ENCODE measurements at regions of chr1 and their contacts with region 1.

Region 1: GRCh38 chr1:220776720-220777326 is 9.9 kb upstream of the MTARC1 start:
- DNase-seq: no peak
- ATAC-seq: peak; percentile 93
- H3K4me3 ChIP-seq: no peak overlapping the region
- H3K27ac ChIP-seq: no peak overlapping the region
- H3K4me1 ChIP-seq: no peaks in the 10 kb centered on the region
- H3K27me3 ChIP-seq: no peaks in the 10 kb centered on the region
- CTCF ChIP-seq: peak; percentile 92 to 96 (median 94)
- EP300 ChIP-seq: no peak
- POLR2A ChIP-seq: no peak
- RAD21 ChIP-seq: peak; percentile 86

Region 2: DNA sequence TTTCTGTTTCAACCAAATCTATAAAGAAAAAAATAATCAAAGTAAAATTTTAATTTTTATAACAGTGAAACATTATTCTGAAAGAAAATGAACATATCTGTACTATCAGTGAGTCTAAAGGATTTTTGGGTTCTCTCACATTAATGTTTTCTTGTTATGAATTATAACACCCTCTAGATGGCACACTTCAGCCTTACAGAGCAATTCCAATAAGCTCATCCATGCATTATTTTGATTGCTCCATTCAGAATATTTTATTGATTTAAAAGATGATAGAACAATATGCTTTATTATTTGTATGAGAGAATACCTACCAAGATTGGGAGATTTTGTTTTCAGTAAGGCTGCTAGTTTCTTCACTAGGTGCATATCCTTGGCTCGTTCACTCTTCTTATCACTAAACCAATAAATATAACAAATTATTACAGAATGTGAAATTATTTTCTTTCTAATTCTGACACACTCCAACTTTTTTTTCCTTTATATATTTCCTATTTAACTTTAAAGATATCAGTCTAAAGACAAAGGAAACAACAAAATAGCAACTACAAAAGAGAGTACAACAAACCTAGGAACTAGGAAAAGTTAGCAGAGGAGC is 587.0 kb before region 1 on chr1:
- CTCF ChIA-PET with region 1: interaction called, 3 read pairs
- POLR2A ChIA-PET with region 1: no interaction called
- RAD21 ChIA-PET with region 1: no interaction called
- SMC1A ChIA-PET with region 1: interaction called, 4 read pairs
- in situ Hi-C with region 1: no loop called
- intact Hi-C with region 1: loop called (anchors 1 kb)
- DNase-seq: no peak
- ATAC-seq: peak; percentile 67
- H3K4me3 ChIP-seq: no peak overlapping the region
- H3K27ac ChIP-seq: no peak overlapping the region
- H3K4me1 ChIP-seq: no peaks in the 10 kb centered on the region
- H3K27me3 ChIP-seq: no peaks in the 10 kb centered on the region
- CTCF ChIP-seq: peak in 2 of 3 experiments; percentile 34 to 53; a peak in 3 of 6 replicates
- EP300 ChIP-seq: no peak
- POLR2A ChIP-seq: no peak
- RAD21 ChIP-seq: peak; percentile 47; the same call in 1 of the 2 replicates

Region 3: DNA sequence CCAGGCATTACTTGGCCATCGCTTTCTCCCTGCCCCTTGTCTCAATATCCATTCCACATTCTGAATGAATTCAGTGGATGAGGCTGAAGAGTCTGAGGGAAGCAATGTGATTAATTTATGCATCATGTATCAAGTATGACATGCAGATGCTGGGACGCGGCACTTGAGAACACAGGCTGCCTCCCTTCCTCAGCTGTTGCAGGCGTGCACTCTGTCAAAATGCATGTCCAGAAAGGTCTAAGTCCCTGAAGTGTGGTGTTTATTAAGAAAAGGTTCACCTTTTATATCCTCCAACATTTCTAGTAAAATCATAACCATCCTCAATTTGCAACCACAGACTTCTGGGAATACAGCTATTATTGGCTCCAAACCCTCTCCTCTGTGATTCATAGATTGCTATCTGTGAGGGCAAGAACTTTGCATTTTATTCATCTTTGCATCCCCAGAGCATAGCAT is 481.9 kb before region 1 on chr1:
- CTCF ChIA-PET with region 1: interaction called, 26 read pairs
- POLR2A ChIA-PET with region 1: no interaction called
- RAD21 ChIA-PET with region 1: interaction called, 4 read pairs
- SMC1A ChIA-PET with region 1: interaction called, 12 read pairs
- in situ Hi-C with region 1: loop called (anchors 5 kb)
- intact Hi-C with region 1: loop called (anchors 2 kb)
- DNase-seq: no peak
- ATAC-seq: no peak
- H3K4me3 ChIP-seq: no peak overlapping the region
- H3K27ac ChIP-seq: no peak overlapping the region
- H3K4me1 ChIP-seq: no peaks in the 10 kb centered on the region
- H3K27me3 ChIP-seq: no peaks in the 10 kb centered on the region
- CTCF ChIP-seq: no peak
- EP300 ChIP-seq: no peak
- POLR2A ChIP-seq: no peak
- RAD21 ChIP-seq: no peak

Region 4: DNA sequence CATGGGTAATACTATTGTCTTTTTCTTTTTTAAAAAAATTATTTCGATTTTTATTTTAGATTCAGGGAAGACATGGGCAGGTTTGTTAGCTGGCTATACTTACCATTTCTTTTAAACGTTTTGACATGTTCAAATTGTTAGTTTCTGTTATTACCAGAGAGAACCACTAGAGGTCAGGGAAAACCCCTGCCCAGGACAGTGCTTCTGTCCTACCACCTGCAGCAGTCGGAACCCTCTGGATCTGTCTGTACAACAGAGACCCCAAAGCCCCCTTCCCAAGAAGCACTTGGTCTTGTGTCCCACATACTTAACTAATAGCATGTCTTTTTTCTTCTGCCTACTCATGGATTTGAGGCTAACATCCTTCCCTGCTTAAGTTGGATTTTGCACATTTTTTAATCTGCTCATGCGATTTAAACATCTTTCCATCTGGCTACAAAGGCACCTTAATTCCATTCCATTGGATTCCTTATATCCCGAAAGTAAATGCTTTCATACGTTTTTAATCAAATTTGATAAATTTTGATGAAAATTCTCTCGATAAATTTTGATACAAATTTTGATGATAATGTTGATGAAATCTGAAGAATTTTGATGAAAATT is 96.6 kb before region 1 on chr1:
- CTCF ChIA-PET with region 1: interaction called, 29 read pairs
- POLR2A ChIA-PET with region 1: no interaction called
- RAD21 ChIA-PET with region 1: interaction called, 5 read pairs
- SMC1A ChIA-PET with region 1: interaction called, 9 read pairs
- in situ Hi-C with region 1: loop called (anchors 10 kb)
- intact Hi-C with region 1: loop called (anchors 1 kb)
- DNase-seq: no peak
- ATAC-seq: peak; percentile 97
- H3K4me3 ChIP-seq: no peak overlapping the region
- H3K27ac ChIP-seq: no peak overlapping the region
- H3K4me1 ChIP-seq: no peaks in the 10 kb centered on the region
- H3K27me3 ChIP-seq: no peaks in the 10 kb centered on the region
- CTCF ChIP-seq: peak; percentile 63 to 77 (median 66)
- EP300 ChIP-seq: no peak
- POLR2A ChIP-seq: no peak
- RAD21 ChIP-seq: peak; percentile 72

Region 5: GRCh38 chr1:220700556-220701179 is 76.2 kb before region 1 on chr1:
- CTCF ChIA-PET with region 1: interaction called, 14 read pairs
- POLR2A ChIA-PET with region 1: interaction called, 3 read pairs
- RAD21 ChIA-PET with region 1: no interaction called
- SMC1A ChIA-PET with region 1: interaction called, 5 read pairs
- in situ Hi-C with region 1: no loop called
- intact Hi-C with region 1: no loop called
- DNase-seq: no peak
- ATAC-seq: no peak
- H3K4me3 ChIP-seq: no peak overlapping the region
- H3K27ac ChIP-seq: no peak overlapping the region
- H3K4me1 ChIP-seq: no peaks in the 10 kb centered on the region
- H3K27me3 ChIP-seq: no peaks in the 10 kb centered on the region
- CTCF ChIP-seq: no peak
- EP300 ChIP-seq: no peak
- POLR2A ChIP-seq: no peak
- RAD21 ChIP-seq: no peak

Region 6: GRCh38 chr1:220733090-220733601 is 43.7 kb before region 1 on chr1:
- CTCF ChIA-PET with region 1: interaction called, 52 read pairs
- POLR2A ChIA-PET with region 1: no interaction called
- RAD21 ChIA-PET with region 1: interaction called, 16 read pairs
- SMC1A ChIA-PET with region 1: interaction called, 19 read pairs
- in situ Hi-C with region 1: no loop called
- intact Hi-C with region 1: loop called (anchors 2 kb)
- DNase-seq: peak; percentile 13
- ATAC-seq: peak; percentile 96
- H3K4me3 ChIP-seq: no peak overlapping the region
- H3K27ac ChIP-seq: no peak overlapping the region
- H3K4me1 ChIP-seq: no peaks in the 10 kb centered on the region
- H3K27me3 ChIP-seq: no peaks in the 10 kb centered on the region
- CTCF ChIP-seq: peak; percentile 78 to 81 (median 80)
- EP300 ChIP-seq: no peak
- POLR2A ChIP-seq: no peak
- RAD21 ChIP-seq: peak; percentile 91

Region 7: GRCh38 chr1:220761688-220762427 is 15.0 kb before region 1 on chr1:
- CTCF ChIA-PET with region 1: interaction called, 32 read pairs
- POLR2A ChIA-PET with region 1: no interaction called
- RAD21 ChIA-PET with region 1: interaction called, 3 read pairs
- SMC1A ChIA-PET with region 1: interaction called, 6 read pairs
- in situ Hi-C with region 1: no loop called
- intact Hi-C with region 1: no loop called
- DNase-seq: no peak
- ATAC-seq: no peak
- H3K4me3 ChIP-seq: no peak overlapping the region
- H3K27ac ChIP-seq: no peak overlapping the region
- H3K4me1 ChIP-seq: no peaks in the 10 kb centered on the region
- H3K27me3 ChIP-seq: no peaks in the 10 kb centered on the region; a peak in 1 of 4 replicates
- CTCF ChIP-seq: no peak
- EP300 ChIP-seq: no peak
- POLR2A ChIP-seq: no peak
- RAD21 ChIP-seq: no peak

Region 8: DNA sequence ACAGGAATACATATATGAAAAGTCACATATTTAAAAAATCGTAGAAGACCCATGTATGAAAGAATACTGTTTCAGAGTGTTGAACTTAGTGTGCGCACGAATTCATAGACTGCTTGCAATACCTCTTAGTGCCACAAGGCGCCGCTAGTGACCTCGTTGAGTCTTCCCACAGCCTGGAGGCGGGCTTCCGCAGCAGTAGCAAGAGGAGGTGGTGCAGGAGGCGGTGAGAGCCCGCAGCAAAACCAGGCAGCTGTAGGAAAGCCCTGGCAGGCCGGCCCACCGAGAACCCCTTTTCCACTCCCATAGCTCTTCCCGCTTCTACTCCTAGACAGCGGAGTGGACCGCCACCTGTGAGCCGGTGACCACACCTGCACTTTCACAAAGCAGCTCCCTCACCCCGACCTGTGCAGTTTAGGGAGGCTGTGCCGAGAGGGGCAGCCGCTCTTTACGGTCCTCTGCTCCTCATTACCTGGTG is 33.4 kb after region 1 on chr1:
- CTCF ChIA-PET with region 1: no interaction called
- POLR2A ChIA-PET with region 1: no interaction called
- RAD21 ChIA-PET with region 1: no interaction called
- SMC1A ChIA-PET with region 1: no interaction called
- in situ Hi-C with region 1: no loop called
- intact Hi-C with region 1: no loop called
- DNase-seq: peak; percentile 8
- ATAC-seq: peak; percentile 95
- H3K4me3 ChIP-seq: no peak overlapping the region
- H3K27ac ChIP-seq: no peak overlapping the region
- H3K4me1 ChIP-seq: no peaks in the 10 kb centered on the region
- H3K27me3 ChIP-seq: no peaks in the 10 kb centered on the region; a peak in 1 of 4 replicates
- CTCF ChIP-seq: peak; percentile 93 to 96 (median 94); a peak in 5 of 6 replicates
- EP300 ChIP-seq: no peak
- POLR2A ChIP-seq: no peak
- RAD21 ChIP-seq: peak; percentile 75

Region 9: GRCh38 chr1:220957233-220957605 is 180.4 kb after region 1 on chr1:
- CTCF ChIA-PET with region 1: no interaction called
- POLR2A ChIA-PET with region 1: no interaction called
- RAD21 ChIA-PET with region 1: no interaction called
- SMC1A ChIA-PET with region 1: no interaction called
- in situ Hi-C with region 1: no loop called
- intact Hi-C with region 1: no loop called
- DNase-seq: no peak
- ATAC-seq: no peak
- H3K4me3 ChIP-seq: no peak overlapping the region
- H3K27ac ChIP-seq: no peak overlapping the region
- H3K4me1 ChIP-seq: no peaks in the 10 kb centered on the region
- H3K27me3 ChIP-seq: no peaks in the 10 kb centered on the region
- CTCF ChIP-seq: no peak
- EP300 ChIP-seq: no peak
- POLR2A ChIP-seq: no peak
- RAD21 ChIP-seq: no peak